Activated T-helper 1 cell treated with anti-CD3 and anti-CD28 coated beads, Interleukin-12 subunit alpha, Interleukin-12 subunit beta, Interleukin-2, Interleukin-4 antibody, amounts not matched to agents 30 ng/mL and 10 ng/mL and 1 ng/mL, durations not matched to agents 14 hours and 24 hours and 36 hours (primary cell): ENCODE measurements at regions of chr5 and their contacts with region 1.

Region 1: DNA sequence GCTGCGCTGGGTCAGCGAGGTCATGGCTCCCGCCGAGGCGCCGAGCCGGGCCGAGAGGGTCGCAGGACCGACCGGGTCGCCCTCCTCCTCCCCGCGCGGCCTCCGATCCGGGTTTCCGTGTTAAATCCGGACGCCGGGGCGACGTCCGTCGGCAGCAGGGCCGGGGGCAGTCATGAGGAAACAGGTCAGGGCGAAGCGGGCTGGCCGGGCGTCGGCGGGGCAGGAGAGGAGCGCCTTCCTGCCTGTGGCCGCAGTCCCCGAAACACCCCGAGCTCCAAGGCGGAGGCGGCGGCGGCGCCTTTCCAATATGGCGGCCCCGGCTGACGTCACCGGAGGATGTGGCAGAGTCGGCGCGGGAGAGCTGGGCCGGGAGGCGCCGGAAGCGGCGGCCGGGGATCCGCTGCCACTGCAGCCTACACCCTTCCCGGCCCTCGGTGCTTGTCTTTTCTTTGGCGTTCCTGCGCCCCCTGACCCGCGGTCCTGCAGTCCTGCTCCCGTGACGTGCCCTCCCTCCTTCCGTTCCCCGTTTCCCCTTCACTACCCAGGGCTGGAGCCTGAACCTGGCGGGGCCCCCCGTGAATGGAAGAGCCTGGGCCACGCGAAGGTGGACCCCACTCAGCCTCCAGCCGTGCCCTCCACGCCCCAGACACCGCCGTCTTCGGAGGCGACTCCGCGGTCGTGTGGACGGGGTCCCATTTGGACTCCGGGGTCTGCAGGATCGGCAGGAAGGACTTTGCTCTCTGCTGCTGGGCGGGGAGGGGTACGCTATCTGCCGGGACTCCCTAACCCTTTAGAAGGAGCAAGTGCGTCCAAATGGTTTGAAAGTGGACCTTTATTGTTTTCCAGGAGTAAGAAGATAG is at the start of gene GOLPH3:
- DNase-seq: peak; percentile 93
- H3K4me3 Mint-ChIP-seq: peak within 1 kb of the TSS; percentile 99
- H3K27ac Mint-ChIP-seq: peak within 1 kb of the TSS; percentile 99
- H3K4me1 Mint-ChIP-seq: peaks cover 31% of the 10 kb centered on the region
- H3K27me3 Mint-ChIP-seq: peaks cover 4% of the 10 kb centered on the region
- total RNA-seq, gene GOLPH3: 85.1 and 91.3 TPM in 2 replicates

Region 2: DNA sequence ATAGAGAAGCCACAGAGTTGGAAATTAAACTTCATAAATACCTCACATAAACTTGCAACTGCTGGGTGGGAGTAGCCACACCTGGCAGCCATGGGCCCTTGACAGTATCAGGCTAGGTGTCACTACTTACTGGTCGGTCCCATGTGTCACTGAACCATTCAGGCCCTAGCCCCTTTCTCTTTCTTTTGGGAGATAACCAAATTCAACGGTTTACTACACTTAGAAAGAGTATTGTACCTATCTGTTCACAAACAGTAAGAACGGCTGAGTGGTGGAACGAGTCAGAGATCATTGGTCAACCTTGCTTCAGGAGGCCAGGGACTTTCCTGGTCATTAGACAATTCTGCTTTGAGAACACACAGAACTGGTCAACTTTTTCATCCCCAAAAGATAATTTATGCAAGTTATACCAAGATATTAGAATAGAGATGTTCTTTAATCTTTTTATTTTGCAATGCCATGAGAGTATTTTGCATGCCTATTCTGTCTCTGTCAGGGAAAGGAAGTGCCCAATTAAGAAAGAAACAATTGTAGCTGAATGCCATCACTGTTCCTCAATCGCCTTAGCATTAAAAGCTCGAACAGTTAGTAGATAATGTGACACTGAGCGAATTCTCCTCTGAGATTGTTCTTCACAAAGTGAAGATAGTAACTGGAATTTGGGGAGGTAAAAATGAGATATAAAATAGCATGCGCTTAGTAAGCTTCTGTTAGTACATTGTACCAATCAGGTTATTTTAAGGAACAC is 51.0 kb before region 1 on chr5:
- intact Hi-C with region 1: loop called (anchors 5 kb)
- DNase-seq: no peak
- H3K4me3 Mint-ChIP-seq: no peak overlapping the region
- H3K27ac Mint-ChIP-seq: no peak overlapping the region
- H3K4me1 Mint-ChIP-seq: peaks cover 25% of the 10 kb centered on the region
- H3K27me3 Mint-ChIP-seq: no peaks in the 10 kb centered on the region

Region 3: DNA sequence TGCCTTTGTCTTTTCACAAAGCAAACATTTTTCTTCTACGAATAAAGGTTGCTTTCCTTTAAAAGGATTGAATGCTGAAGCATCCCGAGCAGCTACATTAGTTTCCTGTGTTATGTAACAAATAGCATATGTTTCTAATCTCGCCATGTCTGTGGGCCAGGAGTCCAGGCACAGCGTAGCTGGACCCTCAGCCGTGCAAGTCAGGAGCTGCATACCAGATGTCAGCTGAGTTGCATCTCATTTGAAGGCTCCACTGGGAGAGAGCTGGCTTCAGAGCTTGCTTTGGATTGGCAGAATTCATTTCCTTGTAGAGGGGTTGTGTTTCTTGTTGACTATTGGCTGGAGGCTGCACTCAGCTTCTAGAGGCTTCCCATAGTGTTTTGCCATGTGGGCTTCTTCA is 15.9 kb after region 1 on chr5:
- intact Hi-C with region 1: no loop called
- DNase-seq: no peak
- H3K4me3 Mint-ChIP-seq: no peak overlapping the region
- H3K27ac Mint-ChIP-seq: no peak overlapping the region
- H3K4me1 Mint-ChIP-seq: no peaks in the 10 kb centered on the region
- H3K27me3 Mint-ChIP-seq: peaks cover 9% of the 10 kb centered on the region

Region 4: GRCh38 chr5:32206509-32207354 is 32.5 kb after region 1 on chr5:
- intact Hi-C with region 1: loop called (anchors 1 kb)
- DNase-seq: no peak
- H3K4me3 Mint-ChIP-seq: no peak overlapping the region
- H3K27ac Mint-ChIP-seq: no peak overlapping the region
- H3K4me1 Mint-ChIP-seq: peaks cover 23% of the 10 kb centered on the region
- H3K27me3 Mint-ChIP-seq: peaks cover 2% of the 10 kb centered on the region

Region 5: GRCh38 chr5:32283539-32284377 is 109.5 kb after region 1 on chr5:
- intact Hi-C with region 1: loop called (anchors 1 kb)
- DNase-seq: no peak
- H3K4me3 Mint-ChIP-seq: no peak overlapping the region
- H3K27ac Mint-ChIP-seq: peak overlapping the region; percentile 53
- H3K4me1 Mint-ChIP-seq: peaks cover 54% of the 10 kb centered on the region
- H3K27me3 Mint-ChIP-seq: no peaks in the 10 kb centered on the region

Region 6: DNA sequence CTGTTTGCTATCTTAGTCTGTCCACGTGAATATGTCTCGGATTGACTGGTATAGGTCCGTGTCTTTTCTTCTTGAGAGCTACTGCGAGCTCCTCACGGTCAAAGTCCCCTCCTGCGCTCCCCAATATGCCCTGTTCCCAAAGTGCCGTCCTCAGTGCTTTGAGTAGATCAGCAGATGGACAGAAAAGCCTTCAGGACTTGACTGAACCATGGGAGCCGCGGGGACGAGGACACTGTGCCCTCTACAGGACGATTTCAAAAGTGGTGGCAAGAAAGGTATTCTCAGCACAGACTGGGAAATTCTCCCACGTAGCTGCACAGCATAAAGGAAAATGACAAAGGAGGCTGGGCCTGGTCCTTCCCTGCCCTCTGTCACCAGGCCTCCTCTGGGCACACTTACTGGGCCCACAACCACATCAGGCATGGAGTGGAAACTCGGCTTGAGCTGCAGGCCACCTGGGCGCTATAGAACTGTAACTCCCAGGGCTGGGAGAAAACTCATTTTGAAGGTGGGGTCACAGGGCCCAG is 155.1 kb after region 1 on chr5:
- intact Hi-C with region 1: loop called (anchors 1 kb)
- DNase-seq: peak; percentile 40
- H3K4me3 Mint-ChIP-seq: no peak overlapping the region
- H3K27ac Mint-ChIP-seq: no peak overlapping the region
- H3K4me1 Mint-ChIP-seq: peaks cover 4% of the 10 kb centered on the region
- H3K27me3 Mint-ChIP-seq: no peaks in the 10 kb centered on the region

Region 7: DNA sequence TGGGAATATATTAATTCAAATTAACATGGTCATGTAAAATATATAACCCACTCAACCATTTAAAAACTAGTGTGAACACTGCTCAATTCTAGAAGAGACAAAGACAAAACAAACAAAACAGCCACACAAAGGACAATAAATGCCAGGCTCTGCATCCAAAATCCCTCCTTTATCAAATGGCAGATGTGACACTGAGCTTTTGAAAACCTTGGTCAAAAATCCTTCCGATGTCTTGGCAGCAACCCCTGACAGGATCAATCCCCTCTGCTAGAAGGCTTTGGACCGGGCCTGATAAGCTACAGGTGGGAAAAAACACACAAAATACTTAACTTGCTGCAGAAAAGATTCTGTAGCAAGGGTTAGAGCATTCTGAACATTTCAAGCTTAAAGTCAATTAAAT is 208.8 kb after region 1 on chr5:
- intact Hi-C with region 1: no loop called
- DNase-seq: no peak
- H3K4me3 Mint-ChIP-seq: no peak overlapping the region
- H3K27ac Mint-ChIP-seq: no peak overlapping the region
- H3K4me1 Mint-ChIP-seq: peaks cover 6% of the 10 kb centered on the region
- H3K27me3 Mint-ChIP-seq: no peaks in the 10 kb centered on the region

Region 8: DNA sequence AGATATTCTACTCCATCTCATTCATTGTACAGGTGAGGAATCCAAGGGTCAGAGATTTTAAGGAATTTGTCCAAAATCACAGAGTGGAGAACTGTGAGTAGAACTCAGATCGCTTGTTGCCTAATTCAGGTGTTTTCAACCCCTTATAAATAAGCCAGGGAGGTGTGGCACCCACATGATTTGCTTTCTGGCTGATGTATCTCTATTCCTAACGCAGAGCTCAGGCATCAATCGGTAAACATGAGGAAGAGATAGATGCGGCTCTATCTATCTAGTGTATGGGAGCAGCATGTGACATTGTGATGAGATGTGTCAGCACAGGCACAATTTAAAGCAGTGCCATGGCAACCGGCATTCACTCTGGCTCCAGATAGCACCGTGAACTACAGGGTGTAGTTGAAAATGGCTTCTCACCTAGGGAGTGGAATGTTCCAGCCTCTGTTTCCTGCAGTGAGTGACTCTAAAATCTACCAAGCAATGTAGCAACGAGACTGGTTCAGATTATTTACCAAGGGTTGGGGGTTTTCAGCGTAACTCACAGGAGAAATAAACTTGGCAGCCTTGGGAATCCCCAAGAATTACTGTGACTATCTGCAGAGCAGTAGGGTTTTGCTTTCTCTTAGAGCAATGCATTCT is 357.8 kb after region 1 on chr5:
- intact Hi-C with region 1: loop called (anchors 10 kb)
- DNase-seq: peak; percentile 66
- H3K4me3 Mint-ChIP-seq: peak overlapping the region; percentile 91
- H3K27ac Mint-ChIP-seq: peak overlapping the region; percentile 98
- H3K4me1 Mint-ChIP-seq: peaks cover 62% of the 10 kb centered on the region
- H3K27me3 Mint-ChIP-seq: no peaks in the 10 kb centered on the region

Region 9: DNA sequence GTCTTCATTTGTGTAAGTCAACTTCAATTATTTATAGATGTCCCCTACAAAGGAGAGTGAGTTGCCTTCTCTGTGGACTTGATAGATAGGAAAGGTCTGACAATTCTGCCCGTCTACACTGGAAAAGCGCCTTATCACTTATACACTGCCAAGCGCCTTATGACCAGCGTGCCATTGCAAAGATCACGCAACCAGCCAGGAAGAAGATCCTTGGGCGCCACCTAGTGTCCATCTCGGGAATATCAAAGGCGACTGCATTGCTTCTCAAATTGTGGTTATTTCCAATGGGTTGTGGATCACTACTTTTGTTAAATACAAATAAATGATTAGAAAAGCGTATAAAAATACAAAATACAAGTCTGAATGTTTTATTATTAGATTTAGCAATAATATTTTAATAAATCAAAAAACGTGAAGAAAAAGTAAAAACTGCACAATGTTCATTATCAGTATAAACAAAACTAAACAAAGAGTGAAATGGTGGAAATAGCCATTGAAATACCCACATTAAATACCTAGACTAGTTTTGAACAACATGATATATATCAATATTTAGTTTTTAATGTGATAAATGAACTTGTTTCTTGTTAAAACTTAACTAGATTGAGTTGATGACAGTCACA is 438.9 kb after region 1 on chr5:
- intact Hi-C with region 1: loop called (anchors 2 kb)
- DNase-seq: peak; percentile 72
- H3K4me3 Mint-ChIP-seq: no peak overlapping the region
- H3K27ac Mint-ChIP-seq: no peak overlapping the region
- H3K4me1 Mint-ChIP-seq: no peaks in the 10 kb centered on the region
- H3K27me3 Mint-ChIP-seq: no peaks in the 10 kb centered on the region